HAP-1 (cell line): ENCODE measurements at regions of chr2 and their contacts with region 1.

Region 1: GRCh38 chr2:98385050-98385699 is 38.9 kb downstream of the CNGA3 start:
- DNase-seq: peak; percentile 75 to 89
- H3K4me3 ChIP-seq: no peak overlapping the region
- H3K4me1 ChIP-seq: no peaks in the 10 kb centered on the region; the same call in 1 of the 2 replicates
- H3K27me3 ChIP-seq: no peaks in the 10 kb centered on the region

Region 2: GRCh38 chr2:97697252-97698235 is 687.6 kb before region 1 on chr2:
- in situ Hi-C with region 1: loop called (anchors 10 kb)
- DNase-seq: peak; percentile 73 to 94
- H3K4me3 ChIP-seq: no peak overlapping the region
- H3K4me1 ChIP-seq: no peaks in the 10 kb centered on the region
- H3K27me3 ChIP-seq: no peaks in the 10 kb centered on the region